HepG2 (cell line): ENCODE measurements at regions of chr12 and their contacts with region 1.

Region 1: DNA sequence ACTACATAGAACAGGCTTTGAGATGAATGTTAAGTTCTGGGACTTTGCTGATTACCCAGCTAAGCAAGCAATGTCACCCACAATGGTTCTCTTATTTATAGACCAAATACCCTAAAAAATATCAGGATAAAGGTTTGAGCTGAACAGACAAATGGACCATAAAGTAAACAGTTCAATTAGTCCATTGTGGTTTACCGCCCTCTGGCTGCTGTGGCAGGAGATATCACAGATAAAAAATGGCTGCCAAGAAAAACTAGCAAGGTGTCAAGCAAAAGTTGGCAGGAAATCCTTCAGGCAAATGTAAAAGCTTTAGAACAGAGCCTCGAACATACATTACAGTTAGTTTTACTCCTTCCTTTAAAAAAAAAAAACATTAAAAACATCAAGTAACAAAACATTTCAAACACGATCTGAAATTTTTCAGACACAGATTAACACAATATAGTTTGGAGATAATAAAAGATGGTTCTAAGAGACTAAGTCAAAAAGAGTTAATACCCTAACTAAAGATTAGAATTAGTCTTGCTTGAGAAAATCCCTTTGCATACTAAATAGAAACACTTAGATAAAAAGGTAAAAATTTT is 41.3 kb downstream of the MED13L start:
- DNase-seq: peak; percentile 43
- ATAC-seq: peak; percentile 49; the same call in 1 of the 3 replicates
- H3K4me3 ChIP-seq: no peak overlapping the region
- H3K27ac ChIP-seq: no peak overlapping the region
- H3K4me1 ChIP-seq: peaks cover 8% of the 10 kb centered on the region
- H3K27me3 ChIP-seq: no peaks in the 10 kb centered on the region
- CTCF ChIP-seq: peak; percentile 77
- EP300 ChIP-seq: no peak
- POLR2A ChIP-seq: no peak
- RAD21 ChIP-seq: peak; percentile 43; the same call in 1 of the 2 replicates

Region 2: DNA sequence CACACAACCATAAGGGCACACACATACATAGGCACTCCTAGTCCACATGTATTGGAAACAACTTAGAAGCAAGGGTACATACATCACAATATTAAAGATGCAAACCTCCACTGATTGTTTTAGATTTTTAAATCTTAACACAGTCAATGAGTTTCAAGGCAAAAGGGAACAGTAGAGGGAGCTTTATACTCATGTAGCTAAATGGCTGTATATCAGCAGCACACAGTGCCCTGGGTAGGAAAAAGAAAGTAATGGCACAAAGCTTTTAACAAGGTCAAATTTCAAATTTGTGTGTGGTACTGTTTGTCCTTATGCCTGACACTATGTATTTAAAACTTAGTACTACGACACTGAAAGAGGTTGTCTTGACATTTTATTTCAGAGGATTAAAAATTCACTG is 220.7 kb before region 1 on chr12:
- CTCF ChIA-PET with region 1: interaction called, 6 read pairs
- POLR2A ChIA-PET with region 1: no interaction called
- in situ Hi-C with region 1: no loop called
- intact Hi-C with region 1: loop called (anchors 1 kb)
- DNase-seq: peak; percentile 21
- ATAC-seq: peak; percentile 75
- H3K4me3 ChIP-seq: no peak overlapping the region
- H3K27ac ChIP-seq: no peak overlapping the region
- H3K4me1 ChIP-seq: no peaks in the 10 kb centered on the region
- H3K27me3 ChIP-seq: no peaks in the 10 kb centered on the region
- CTCF ChIP-seq: peak; percentile 60
- EP300 ChIP-seq: no peak
- POLR2A ChIP-seq: no peak
- RAD21 ChIP-seq: no peak

Region 3: GRCh38 chr12:116066381-116067230 is 169.6 kb before region 1 on chr12:
- CTCF ChIA-PET with region 1: interaction called, 17 read pairs
- POLR2A ChIA-PET with region 1: no interaction called
- in situ Hi-C with region 1: loop called (anchors 10 kb)
- intact Hi-C with region 1: loop called (anchors 1 kb)
- DNase-seq: peak; percentile 34
- ATAC-seq: no peak; the same call in 2 of the 3 replicates
- H3K4me3 ChIP-seq: no peak overlapping the region
- H3K27ac ChIP-seq: no peak overlapping the region
- H3K4me1 ChIP-seq: peaks cover 14% of the 10 kb centered on the region
- H3K27me3 ChIP-seq: no peaks in the 10 kb centered on the region
- CTCF ChIP-seq: peak; percentile 63
- EP300 ChIP-seq: no peak
- POLR2A ChIP-seq: no peak
- RAD21 ChIP-seq: peak; percentile 21; the same call in 1 of the 2 replicates

Region 4: DNA sequence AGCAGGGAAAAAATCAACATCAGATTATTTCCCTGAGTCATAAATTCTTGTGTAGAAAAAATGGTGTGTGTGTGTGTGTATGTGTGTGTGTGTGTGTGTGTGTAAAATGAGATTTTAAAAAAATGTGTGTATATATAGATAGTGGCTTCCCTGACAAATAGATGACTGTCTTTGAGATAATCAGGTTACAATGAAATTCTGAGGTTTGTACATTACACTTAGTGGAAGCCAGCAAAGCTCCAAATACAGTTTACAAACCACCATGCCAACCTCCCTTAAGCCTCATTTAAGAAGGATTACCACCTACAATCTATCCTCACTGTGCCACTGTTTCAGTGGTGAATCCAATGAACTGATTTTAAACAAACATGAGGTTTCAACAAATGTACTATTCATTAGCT is 52.5 kb before region 1 on chr12:
- CTCF ChIA-PET with region 1: no interaction called
- POLR2A ChIA-PET with region 1: no interaction called
- in situ Hi-C with region 1: no loop called
- intact Hi-C with region 1: no loop called
- DNase-seq: no peak
- ATAC-seq: no peak
- H3K4me3 ChIP-seq: no peak overlapping the region
- H3K27ac ChIP-seq: no peak overlapping the region
- H3K4me1 ChIP-seq: peaks cover 66% of the 10 kb centered on the region
- H3K27me3 ChIP-seq: no peaks in the 10 kb centered on the region
- CTCF ChIP-seq: no peak
- EP300 ChIP-seq: no peak
- POLR2A ChIP-seq: no peak
- RAD21 ChIP-seq: no peak

Region 5: GRCh38 chr12:116257215-116257614 is 21.0 kb after region 1 on chr12:
- CTCF ChIA-PET with region 1: no interaction called
- POLR2A ChIA-PET with region 1: no interaction called
- in situ Hi-C with region 1: no loop called
- intact Hi-C with region 1: no loop called
- DNase-seq: no peak
- ATAC-seq: no peak
- H3K4me3 ChIP-seq: no peak overlapping the region
- H3K27ac ChIP-seq: no peak overlapping the region
- H3K4me1 ChIP-seq: peaks cover 60% of the 10 kb centered on the region
- H3K27me3 ChIP-seq: no peaks in the 10 kb centered on the region
- CTCF ChIP-seq: no peak
- EP300 ChIP-seq: no peak
- POLR2A ChIP-seq: no peak
- RAD21 ChIP-seq: no peak